MCF 10A (cell line): ENCODE measurements at regions of chr6 and their contacts with region 1.

Region 1: DNA sequence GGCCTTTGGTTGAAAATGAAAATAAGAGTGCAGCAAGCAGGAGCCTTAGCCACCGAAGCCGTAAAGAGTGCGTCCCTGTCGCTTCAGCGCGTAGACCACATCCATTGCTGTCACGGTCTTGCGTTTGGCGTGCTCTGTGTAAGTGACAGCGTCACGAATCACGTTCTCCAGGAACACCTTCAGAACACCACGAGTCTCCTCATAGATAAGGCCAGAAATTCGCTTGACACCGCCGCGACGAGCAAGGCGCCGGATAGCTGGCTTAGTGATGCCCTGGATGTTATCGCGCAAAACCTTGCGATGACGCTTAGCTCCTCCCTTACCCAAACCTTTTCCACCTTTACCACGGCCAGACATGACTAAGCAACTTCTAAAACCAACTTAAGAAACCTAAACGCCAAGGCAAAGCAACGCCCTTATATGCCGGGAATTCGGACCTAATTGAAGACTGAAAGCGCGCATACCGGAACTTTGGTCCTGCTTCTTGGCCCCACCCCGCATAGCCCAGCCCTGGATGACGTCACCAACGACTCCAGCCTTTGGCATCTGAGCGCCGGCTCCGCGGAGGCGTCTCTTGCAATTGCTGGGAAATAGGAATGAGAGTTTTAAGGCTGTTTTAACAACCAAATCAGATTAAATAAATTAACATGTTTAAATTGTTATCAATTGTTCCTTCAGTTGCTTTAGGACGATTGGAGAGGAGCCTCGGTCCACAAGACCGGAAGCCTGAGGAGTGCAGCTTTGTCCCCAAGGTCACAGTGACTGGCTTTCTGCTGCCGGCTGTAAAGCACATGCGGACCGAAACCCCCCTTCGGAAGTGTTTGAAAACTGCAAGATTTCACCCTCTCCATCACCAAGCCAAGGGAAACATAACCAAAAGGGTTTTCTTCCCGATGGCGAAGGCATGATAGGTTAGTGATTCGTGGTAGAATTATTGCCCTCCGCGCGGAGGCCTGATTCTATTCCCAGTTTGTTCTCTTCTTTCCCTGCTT is 79.6 kb upstream of the BTN3A2 start:
- DNase-seq: peak; percentile 100
- H3K4me3 Mint-ChIP-seq: peak overlapping the region; percentile 91
- H3K27ac Mint-ChIP-seq: peak overlapping the region; percentile 92
- H3K4me1 Mint-ChIP-seq: peaks cover 10% of the 10 kb centered on the region
- H3K27me3 Mint-ChIP-seq: no peaks in the 10 kb centered on the region
- CTCF ChIP-seq: no peak

Region 2: GRCh38 chr6:26031595-26032339 is 253.7 kb before region 1 on chr6:
- CTCF ChIA-PET with region 1: no interaction called
- POLR2A ChIA-PET with region 1: interaction called, 13 read pairs
- intact Hi-C with region 1: no loop called
- DNase-seq: peak; percentile 99
- H3K4me3 Mint-ChIP-seq: peak overlapping the region; percentile 81
- H3K27ac Mint-ChIP-seq: peak overlapping the region; percentile 97
- H3K4me1 Mint-ChIP-seq: peaks cover 25% of the 10 kb centered on the region
- H3K27me3 Mint-ChIP-seq: no peaks in the 10 kb centered on the region
- CTCF ChIP-seq: peak; percentile 12

Region 3: DNA sequence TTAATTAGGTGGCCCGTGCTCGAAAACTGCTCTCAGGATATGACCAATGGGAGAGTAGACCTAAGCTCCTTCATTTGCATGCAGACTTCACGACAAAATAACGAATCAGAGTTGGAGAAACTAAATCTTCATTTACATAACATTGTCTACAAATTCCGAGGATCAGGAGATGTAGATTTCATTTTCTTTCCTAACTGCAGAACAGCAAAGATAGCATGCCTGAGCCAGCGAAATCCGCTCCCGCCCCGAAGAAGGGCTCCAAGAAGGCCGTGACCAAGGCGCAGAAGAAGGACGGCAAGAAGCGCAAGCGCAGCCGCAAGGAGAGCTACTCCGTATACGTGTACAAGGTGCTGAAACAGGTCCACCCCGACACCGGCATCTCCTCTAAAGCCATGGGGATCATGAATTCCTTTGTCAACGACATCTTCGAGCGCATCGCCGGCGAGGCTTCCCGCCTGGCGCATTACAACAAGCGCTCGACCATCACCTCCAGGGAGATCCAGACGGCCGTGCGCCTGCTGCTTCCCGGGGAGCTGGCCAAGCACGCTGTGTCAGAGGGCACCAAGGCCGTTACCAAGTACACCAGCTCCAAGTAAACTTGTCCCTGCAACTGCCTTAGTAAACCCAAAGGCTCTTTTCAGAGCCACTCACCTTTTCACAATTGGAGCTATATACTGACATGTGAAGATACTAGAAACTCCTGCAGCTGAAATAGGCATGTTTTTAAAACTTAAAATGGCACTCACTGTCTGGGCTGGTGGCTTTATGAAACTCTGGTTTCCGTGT is 101.7 kb before region 1 on chr6:
- CTCF ChIA-PET with region 1: no interaction called
- POLR2A ChIA-PET with region 1: interaction called, 12 read pairs
- intact Hi-C with region 1: no loop called
- DNase-seq: peak; percentile 56
- H3K4me3 Mint-ChIP-seq: peak overlapping the region; percentile 79
- H3K27ac Mint-ChIP-seq: peak overlapping the region; percentile 84
- H3K4me1 Mint-ChIP-seq: peaks cover 27% of the 10 kb centered on the region
- H3K27me3 Mint-ChIP-seq: no peaks in the 10 kb centered on the region
- CTCF ChIP-seq: no peak

Region 4: GRCh38 chr6:26234421-26235296 is 50.8 kb before region 1 on chr6:
- CTCF ChIA-PET with region 1: no interaction called
- POLR2A ChIA-PET with region 1: interaction called, 45 read pairs
- intact Hi-C with region 1: no loop called
- DNase-seq: peak; percentile 90
- H3K4me3 Mint-ChIP-seq: peak overlapping the region; percentile 82
- H3K27ac Mint-ChIP-seq: peak overlapping the region; percentile 85
- H3K4me1 Mint-ChIP-seq: peaks cover 32% of the 10 kb centered on the region
- H3K27me3 Mint-ChIP-seq: no peaks in the 10 kb centered on the region
- CTCF ChIP-seq: no peak

Region 5: DNA sequence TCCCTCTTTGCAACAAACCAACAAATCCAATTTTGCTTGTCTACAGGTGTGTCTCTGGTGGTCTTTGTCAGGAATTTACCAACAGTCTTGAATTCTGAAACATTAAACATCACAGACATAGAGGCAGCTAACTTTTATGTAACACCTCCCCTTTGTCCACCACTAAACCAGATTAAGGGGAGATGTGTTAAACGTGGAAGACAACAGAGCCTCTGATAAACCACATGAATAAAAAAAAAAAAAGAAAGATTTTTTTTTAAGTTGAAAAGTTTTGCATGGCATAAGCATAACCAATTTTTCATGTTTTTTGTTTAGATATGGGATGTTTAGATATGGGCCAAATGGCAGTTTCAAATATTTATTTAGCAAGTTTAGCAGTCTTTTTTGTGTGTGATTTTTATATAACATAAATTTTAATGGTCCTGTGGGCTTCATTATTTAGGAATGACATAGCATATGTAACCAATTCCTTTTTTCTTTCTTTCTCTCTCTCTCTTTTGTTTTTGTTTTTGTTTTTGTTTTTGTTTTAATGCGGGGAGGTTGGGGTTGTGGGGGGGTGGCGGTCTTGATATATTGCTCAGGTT is 18.9 kb after region 1 on chr6:
- CTCF ChIA-PET with region 1: no interaction called
- POLR2A ChIA-PET with region 1: interaction called, 28 read pairs
- intact Hi-C with region 1: no loop called
- DNase-seq: no peak
- H3K4me3 Mint-ChIP-seq: peak overlapping the region; percentile 76
- H3K27ac Mint-ChIP-seq: peak overlapping the region; percentile 93
- H3K4me1 Mint-ChIP-seq: peaks cover 8% of the 10 kb centered on the region
- H3K27me3 Mint-ChIP-seq: no peaks in the 10 kb centered on the region
- CTCF ChIP-seq: no peak

Region 6: DNA sequence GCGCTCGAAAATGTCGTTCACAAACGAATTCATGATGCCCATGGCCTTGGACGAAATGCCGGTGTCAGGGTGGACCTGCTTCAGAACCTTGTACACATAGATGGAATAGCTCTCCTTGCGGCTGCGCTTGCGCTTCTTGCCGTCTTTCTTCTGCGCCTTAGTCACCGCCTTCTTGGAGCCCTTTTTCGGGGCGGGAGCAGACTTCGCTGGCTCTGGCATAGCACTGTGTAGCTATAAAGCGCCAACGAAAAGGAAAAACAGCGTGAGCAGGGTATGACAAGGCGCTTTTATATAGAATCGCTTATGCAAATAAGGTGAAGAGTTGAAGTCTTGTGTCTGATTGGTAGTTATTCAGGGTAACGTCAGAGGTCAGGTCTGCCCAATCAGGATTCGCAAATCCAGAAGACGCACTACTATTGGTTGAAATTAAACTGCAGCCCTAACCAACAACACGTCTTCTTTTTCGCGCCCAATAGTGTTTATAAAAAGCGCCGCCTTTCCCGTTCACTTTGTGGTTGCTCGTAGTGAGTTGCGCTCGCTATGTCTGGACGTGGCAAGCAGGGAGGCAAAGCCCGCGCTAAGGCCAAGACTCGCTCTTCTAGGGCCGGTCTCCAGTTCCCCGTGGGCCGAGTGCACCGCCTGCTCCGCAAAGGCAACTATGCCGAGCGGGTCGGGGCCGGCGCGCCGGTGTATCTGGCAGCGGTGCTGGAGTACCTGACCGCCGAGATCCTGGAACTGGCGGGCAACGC is 847.3 kb after region 1 on chr6:
- CTCF ChIA-PET with region 1: no interaction called
- POLR2A ChIA-PET with region 1: interaction called, 16 read pairs
- intact Hi-C with region 1: loop called (anchors 5 kb)
- DNase-seq: peak; percentile 99
- H3K4me3 Mint-ChIP-seq: no peak overlapping the region
- H3K27ac Mint-ChIP-seq: no peak overlapping the region
- H3K4me1 Mint-ChIP-seq: peaks cover 11% of the 10 kb centered on the region
- H3K27me3 Mint-ChIP-seq: no peaks in the 10 kb centered on the region
- CTCF ChIP-seq: no peak